ENCODE measurements at regions of chr1 and their contacts with region 1.

Region 1: GRCh38 chr1:941588-942383 is 17.3 kb downstream of the NOC2L start:
- DNase-seq: no peak
- ATAC-seq: peak; percentile 50
- H3K4me3 ChIP-seq: no peak overlapping the region
- H3K27ac ChIP-seq: no peak overlapping the region
- H3K4me1 ChIP-seq: peaks cover 7% of the 10 kb centered on the region; the same call in 1 of the 2 replicates
- H3K27me3 ChIP-seq: peaks cover 6 to 8% of the 10 kb centered on the region in 2 experiments
- CTCF ChIP-seq: no peak
- EP300 ChIP-seq: no peak
- POLR2A ChIP-seq: peak; percentile 42; the same call in 1 of the 2 replicates
- RAD21 ChIP-seq: no peak

Region 2: GRCh38 chr1:869499-870244 is 72.1 kb before region 1 on chr1:
- CTCF ChIA-PET with region 1: no interaction called
- POLR2A ChIA-PET with region 1: no interaction called
- RAD21 ChIA-PET with region 1: no interaction called
- SMC1A ChIA-PET with region 1: no interaction called
- in situ Hi-C with region 1: loop called (anchors 10 kb)
- intact Hi-C with region 1: no loop called
- DNase-seq: no peak
- ATAC-seq: peak; percentile 93
- H3K4me3 ChIP-seq: no peak overlapping the region
- H3K27ac ChIP-seq: no peak overlapping the region
- H3K4me1 ChIP-seq: peaks cover 12% of the 10 kb centered on the region
- H3K27me3 ChIP-seq: no peaks in the 10 kb centered on the region
- CTCF ChIP-seq: peak; percentile 66 to 68 (median 66); a peak in 5 of 6 replicates
- EP300 ChIP-seq: no peak
- POLR2A ChIP-seq: no peak
- RAD21 ChIP-seq: peak; percentile 29; the same call in 1 of the 2 replicates